CD8-positive, alpha-beta T cell (primary cell): ENCODE measurements at regions of chr12 and their contacts with region 1.

Region 1: GRCh38 chr12:97927977-97928376 is 465.4 kb downstream of the RMST start:
- DNase-seq: no peak
- ATAC-seq: no peak
- H3K4me3 ChIP-seq: no peak overlapping the region
- H3K4me3 Mint-ChIP-seq: no peak overlapping the region
- H3K27ac ChIP-seq: no peak overlapping the region
- H3K27ac Mint-ChIP-seq: no peak overlapping the region
- H3K4me1 ChIP-seq: no peaks in the 10 kb centered on the region
- H3K4me1 Mint-ChIP-seq: no peaks in the 10 kb centered on the region
- H3K27me3 ChIP-seq: no peaks in the 10 kb centered on the region
- H3K27me3 Mint-ChIP-seq: no peaks in the 10 kb centered on the region
- CTCF ChIP-seq: no peak

Region 2: GRCh38 chr12:97903356-97903755 is 24.6 kb before region 1 on chr12:
- CTCF ChIA-PET with region 1: no interaction called
- POLR2A ChIA-PET with region 1: no interaction called
- intact Hi-C with region 1: loop called in 1 of 2 experiments (anchors 1 kb)
- DNase-seq: no peak
- ATAC-seq: no peak
- H3K4me3 ChIP-seq: no peak overlapping the region
- H3K4me3 Mint-ChIP-seq: no peak overlapping the region
- H3K27ac ChIP-seq: no peak overlapping the region
- H3K27ac Mint-ChIP-seq: no peak overlapping the region
- H3K4me1 ChIP-seq: no peaks in the 10 kb centered on the region
- H3K4me1 Mint-ChIP-seq: no peaks in the 10 kb centered on the region
- H3K27me3 ChIP-seq: no peaks in the 10 kb centered on the region
- H3K27me3 Mint-ChIP-seq: peaks cover 2% of the 10 kb centered on the region
- CTCF ChIP-seq: no peak